Posterior vena cava (tissue), 2 donors: ENCODE measurements at regions of chr11 and their contacts with region 1.

Region 1: GRCh38 chr11:2428322-2428795 is 16.0 kb downstream of the TRPM5 start:
- DNase-seq: peak; percentile 92

Region 2: DNA sequence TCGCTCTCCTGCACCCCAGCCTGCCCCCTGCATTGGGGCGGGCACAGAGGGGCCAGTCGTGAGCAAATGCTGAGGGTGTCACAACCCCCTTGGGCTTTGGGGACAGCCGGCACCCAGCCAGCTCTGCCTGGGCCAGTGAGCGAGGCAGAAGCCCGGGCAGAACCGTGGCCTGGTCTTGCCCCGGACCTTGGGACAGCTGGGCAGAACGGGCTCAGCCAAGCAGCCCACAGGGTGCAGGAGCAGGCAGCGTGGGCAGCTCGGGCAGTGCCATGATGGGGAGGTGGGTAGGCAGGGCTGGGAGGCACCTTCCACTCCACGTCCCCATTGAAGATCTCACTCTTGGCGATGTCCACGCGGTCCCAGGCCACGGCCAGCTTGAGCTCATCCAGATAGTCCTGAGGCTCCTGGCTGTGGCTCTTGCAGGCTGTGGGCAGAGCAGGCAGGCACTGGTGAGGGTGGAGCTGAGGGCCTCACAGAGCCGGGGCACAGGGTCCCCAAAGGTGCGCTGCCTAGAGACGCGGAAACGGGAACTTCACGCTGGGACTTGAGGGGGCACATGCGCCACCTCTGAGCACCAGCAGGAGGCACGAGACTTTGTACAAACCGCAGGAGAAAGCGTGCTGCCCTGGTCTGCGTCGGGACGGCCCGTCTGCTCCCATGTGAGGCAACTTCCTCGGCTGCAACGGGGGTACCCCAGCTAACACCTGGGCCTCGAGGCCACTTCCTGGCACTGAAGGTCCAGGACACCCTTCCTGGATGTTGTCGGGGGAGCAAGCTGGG is 12.6 kb before region 1 on chr11:
- intact Hi-C with region 1: no loop called
- DNase-seq: no peak

Region 3: DNA sequence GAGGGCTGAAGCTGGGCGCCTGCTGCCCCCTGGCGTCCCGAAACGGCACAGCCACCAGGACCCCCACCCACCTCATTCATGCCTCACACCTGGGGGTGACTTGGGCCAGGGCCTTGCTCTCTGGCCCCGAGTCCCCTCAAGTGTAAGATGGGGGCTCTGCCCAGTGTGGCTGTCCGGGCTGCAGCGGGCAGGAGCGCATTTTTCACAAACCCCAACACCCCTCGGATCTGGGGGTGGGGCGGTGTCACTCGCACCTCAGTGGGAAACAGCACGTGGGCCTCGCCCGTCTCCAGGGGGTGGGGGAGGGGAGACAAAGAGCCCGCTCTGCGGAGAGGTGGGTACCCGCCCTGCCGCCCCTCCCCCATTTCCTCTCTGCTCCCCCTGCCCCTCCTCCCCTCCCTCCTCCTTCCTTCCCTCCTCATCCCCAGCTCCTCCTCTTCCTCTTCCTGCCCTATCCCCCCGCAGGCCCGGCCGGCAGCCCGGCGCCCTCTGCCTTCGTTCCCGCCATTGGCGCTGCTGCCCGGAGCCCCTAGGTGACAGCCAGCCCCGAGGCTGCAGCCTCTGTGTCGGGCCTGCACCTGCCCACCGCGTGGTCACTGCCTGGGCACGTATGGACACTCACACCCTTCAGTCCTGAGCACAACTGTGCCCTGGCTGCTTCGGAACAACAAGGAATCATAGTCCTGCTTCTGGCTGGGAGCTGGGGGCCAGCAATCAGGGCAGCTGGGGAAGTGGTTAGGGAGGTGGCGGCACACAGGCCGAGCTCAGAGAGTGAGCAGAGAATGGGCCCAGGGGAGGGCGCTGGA is 464.1 kb after region 1 on chr11:
- intact Hi-C with region 1: loop called in 1 of 2 experiments (anchors 5 kb)
- DNase-seq: no peak